Right ventricle myocardium superior (tissue), 1 donor: ENCODE measurements at regions of chr15 and their contacts with region 1.

Region 1: DNA sequence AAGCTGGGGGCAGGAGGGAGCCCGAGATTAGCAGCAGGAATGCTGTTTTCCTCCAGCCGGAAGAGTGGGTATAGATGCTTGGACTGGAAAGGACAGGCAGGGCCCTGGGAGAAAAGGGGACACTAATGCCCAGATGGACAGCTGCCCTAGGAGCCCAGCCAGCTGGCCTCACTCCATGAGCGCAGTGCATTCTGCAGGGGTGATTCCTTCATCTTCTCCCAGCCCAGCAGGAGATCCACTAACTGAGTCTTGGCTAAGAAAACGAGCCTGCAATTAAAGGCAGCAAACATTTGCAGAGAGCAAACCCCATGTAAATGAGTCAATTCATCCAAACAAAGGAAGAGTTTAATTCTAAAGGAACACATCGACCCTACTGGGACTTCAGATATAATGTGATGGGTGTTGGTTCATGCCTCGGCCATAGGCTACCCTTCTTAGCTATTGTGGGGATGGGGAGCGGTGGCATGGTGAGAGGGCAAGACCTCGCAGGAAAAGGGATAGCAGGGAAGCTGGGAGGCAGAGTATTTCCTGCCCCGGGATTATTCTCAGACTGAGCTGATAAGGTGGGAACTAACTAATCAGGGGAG is 13.3 kb upstream of the MINAR1 start:
- DNase-seq: no peak
- ATAC-seq: peak; percentile 61

Region 2: GRCh38 chr15:79673416-79674123 is 254.8 kb after region 1 on chr15:
- intact Hi-C with region 1: loop called (anchors 10 kb)
- DNase-seq: no peak
- ATAC-seq: no peak